Activated CD8-positive, alpha-beta T cell treated with anti-CD3 and anti-CD28 coated beads for 36 hours (primary cell): ENCODE measurements at regions of chr22 and their contacts with region 1.

Region 1: GRCh38 chr22:22591348-22592299 is 32.6 kb upstream of the PRAME start:
- DNase-seq: no peak
- ATAC-seq: no peak
- H3K4me3 Mint-ChIP-seq: no peak overlapping the region
- H3K27ac Mint-ChIP-seq: no peak overlapping the region
- H3K4me1 Mint-ChIP-seq: no peaks in the 10 kb centered on the region
- H3K27me3 Mint-ChIP-seq: peaks cover 7% of the 10 kb centered on the region
- CTCF ChIP-seq: no peak

Region 2: DNA sequence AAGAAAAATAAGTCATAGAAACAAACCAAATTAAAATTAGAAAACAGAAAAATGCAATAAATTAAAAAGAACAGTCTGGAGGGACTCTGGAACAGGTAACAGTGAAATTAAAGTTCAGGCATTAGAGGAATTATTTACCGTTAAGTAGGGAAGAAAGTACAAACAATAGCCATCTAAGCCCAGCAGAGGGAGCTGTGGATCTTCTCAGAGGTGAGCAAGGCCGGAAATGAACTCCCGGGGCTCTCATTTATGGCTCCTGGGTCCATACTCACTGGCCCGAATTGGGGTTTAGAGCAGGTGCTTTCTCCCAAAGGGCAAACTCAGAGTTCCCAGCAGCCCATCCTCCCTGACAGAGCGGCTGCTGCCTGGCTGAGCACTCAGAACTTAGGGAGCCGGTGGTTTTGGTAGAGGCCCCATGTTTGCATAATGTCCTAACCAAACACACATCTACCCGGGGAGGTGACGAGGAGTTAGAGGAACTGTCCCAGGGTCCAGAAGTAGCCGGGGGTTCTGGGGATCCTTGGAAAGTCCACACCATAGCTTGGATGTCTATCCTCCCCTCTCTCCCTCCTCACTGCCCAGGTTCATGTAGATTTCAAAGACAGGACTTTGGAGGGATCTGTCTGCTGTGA is 434.8 kb before region 1 on chr22:
- CTCF ChIA-PET with region 1: no interaction called
- POLR2A ChIA-PET with region 1: no interaction called
- intact Hi-C with region 1: no loop called
- DNase-seq: peak; percentile 84
- ATAC-seq: peak; percentile 99
- H3K4me3 Mint-ChIP-seq: no peak overlapping the region
- H3K27ac Mint-ChIP-seq: peak overlapping the region; percentile 53
- H3K4me1 Mint-ChIP-seq: no peaks in the 10 kb centered on the region
- H3K27me3 Mint-ChIP-seq: peaks cover 5% of the 10 kb centered on the region
- CTCF ChIP-seq: peak; percentile 82

Region 3: GRCh38 chr22:22558972-22559603 is 32.5 kb before region 1 on chr22 and contains the start of gene PRAME:
- CTCF ChIA-PET with region 1: interaction called, 15 read pairs
- POLR2A ChIA-PET with region 1: no interaction called
- intact Hi-C with region 1: no loop called
- DNase-seq: peak; percentile 93
- ATAC-seq: peak; percentile 99
- H3K4me3 Mint-ChIP-seq: no peak within 1 kb of the TSS
- H3K27ac Mint-ChIP-seq: no peak within 1 kb of the TSS
- H3K4me1 Mint-ChIP-seq: peaks cover 4% of the 10 kb centered on the region
- H3K27me3 Mint-ChIP-seq: peaks cover 1% of the 10 kb centered on the region
- CTCF ChIP-seq: peak; percentile 95
- total RNA-seq, gene PRAME: not detected

Region 4: GRCh38 chr22:22576244-22576988 is 15.2 kb before region 1 on chr22:
- CTCF ChIA-PET with region 1: interaction called, 30 read pairs
- POLR2A ChIA-PET with region 1: no interaction called
- intact Hi-C with region 1: no loop called
- DNase-seq: peak; percentile 51
- ATAC-seq: peak; percentile 24
- H3K4me3 Mint-ChIP-seq: no peak overlapping the region
- H3K27ac Mint-ChIP-seq: no peak overlapping the region
- H3K4me1 Mint-ChIP-seq: no peaks in the 10 kb centered on the region
- H3K27me3 Mint-ChIP-seq: peaks cover 2% of the 10 kb centered on the region
- CTCF ChIP-seq: peak; percentile 77

Region 5: DNA sequence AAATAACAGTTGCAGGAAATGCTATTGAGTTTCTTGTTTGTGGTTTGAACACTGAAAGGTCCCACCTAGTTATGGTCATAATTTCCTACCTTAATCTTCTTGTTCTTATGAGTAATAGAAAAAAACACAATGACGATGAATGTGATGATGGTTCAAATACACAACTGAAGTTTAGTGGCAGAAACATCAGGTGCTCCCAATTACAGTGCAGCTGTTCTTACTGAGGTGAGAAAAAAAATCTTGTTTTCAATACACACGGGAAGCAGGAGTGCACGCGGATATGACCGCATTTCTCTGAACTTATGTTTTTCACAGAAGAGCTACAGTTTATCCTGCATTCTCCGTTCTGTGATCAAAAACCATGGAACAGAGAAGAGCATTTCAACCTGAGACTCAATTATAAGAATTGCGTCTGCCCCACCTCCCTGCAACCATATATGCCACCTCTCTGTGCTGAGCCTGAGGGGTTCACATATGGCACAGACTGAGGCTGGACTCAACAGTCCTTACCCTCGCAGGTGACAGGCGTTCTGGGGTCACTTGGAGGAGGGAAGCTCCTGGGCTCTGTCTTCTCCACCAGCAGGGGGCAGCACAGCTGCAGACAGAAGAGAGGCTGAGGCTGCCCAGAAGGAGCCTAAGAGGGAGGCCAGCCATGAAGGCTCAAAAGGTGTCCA is 196.3 kb after region 1 on chr22:
- CTCF ChIA-PET with region 1: no interaction called
- POLR2A ChIA-PET with region 1: no interaction called
- intact Hi-C with region 1: no loop called
- DNase-seq: peak; percentile 81
- ATAC-seq: peak; percentile 84
- H3K4me3 Mint-ChIP-seq: no peak overlapping the region
- H3K27ac Mint-ChIP-seq: peak overlapping the region; percentile 46
- H3K4me1 Mint-ChIP-seq: peaks cover 34% of the 10 kb centered on the region
- H3K27me3 Mint-ChIP-seq: no peaks in the 10 kb centered on the region
- CTCF ChIP-seq: peak; percentile 89